HEK293 (cell line): ENCODE measurements at regions of chr20 and their contacts with region 1.

Region 1: GRCh38 chr20:49132995-49133478 is 55.1 kb downstream of the STAU1 start:
- H3K4me3 ChIP-seq: no peak overlapping the region
- H3K27ac ChIP-seq: no peak overlapping the region
- H3K4me1 ChIP-seq: no peaks in the 10 kb centered on the region
- CTCF ChIP-seq: no peak

Region 2: GRCh38 chr20:49122920-49123319 is 10.1 kb before region 1 on chr20:
- CTCF ChIA-PET with region 1: interaction called, 10 read pairs
- POLR2A ChIA-PET with region 1: no interaction called
- H3K4me3 ChIP-seq: no peak overlapping the region
- H3K27ac ChIP-seq: no peak overlapping the region
- H3K4me1 ChIP-seq: no peaks in the 10 kb centered on the region
- CTCF ChIP-seq: no peak

Region 3: GRCh38 chr20:49166534-49167449 is 33.8 kb after region 1 on chr20:
- CTCF ChIA-PET with region 1: interaction called, 13 read pairs
- POLR2A ChIA-PET with region 1: no interaction called
- H3K4me3 ChIP-seq: no peak overlapping the region
- H3K27ac ChIP-seq: no peak overlapping the region
- H3K4me1 ChIP-seq: peaks cover 19% of the 10 kb centered on the region
- CTCF ChIP-seq: no peak

Region 4: GRCh38 chr20:49179368-49180277 is 46.6 kb after region 1 on chr20:
- CTCF ChIA-PET with region 1: interaction called, 17 read pairs
- POLR2A ChIA-PET with region 1: no interaction called
- H3K4me3 ChIP-seq: no peak overlapping the region
- H3K27ac ChIP-seq: no peak overlapping the region
- H3K4me1 ChIP-seq: peaks cover 7% of the 10 kb centered on the region
- CTCF ChIP-seq: no peak